Mammary epithelial cell (primary cell): ENCODE measurements at regions of chr14 and their contacts with region 1.

Region 1: GRCh38 chr14:104768437-104769323 is 15.7 kb downstream of the SIVA1 start:
- DNase-seq: peak; percentile 67
- H3K4me3 ChIP-seq: no peak overlapping the region
- H3K27ac ChIP-seq: no peak overlapping the region
- H3K4me1 ChIP-seq: peaks cover 4% of the 10 kb centered on the region
- H3K27me3 ChIP-seq: no peaks in the 10 kb centered on the region
- CTCF ChIP-seq: peak; percentile 77 to 88

Region 2: GRCh38 chr14:104370256-104370870 is 398.3 kb before region 1 on chr14:
- CTCF ChIA-PET with region 1: no interaction called
- dilution Hi-C with region 1: no loop called
- in situ Hi-C with region 1: no loop called
- intact Hi-C with region 1: no loop called
- DNase-seq: no peak
- H3K4me3 ChIP-seq: no peak overlapping the region
- H3K27ac ChIP-seq: no peak overlapping the region
- H3K4me1 ChIP-seq: no peaks in the 10 kb centered on the region
- H3K27me3 ChIP-seq: no peaks in the 10 kb centered on the region
- CTCF ChIP-seq: no peak

Region 3: DNA sequence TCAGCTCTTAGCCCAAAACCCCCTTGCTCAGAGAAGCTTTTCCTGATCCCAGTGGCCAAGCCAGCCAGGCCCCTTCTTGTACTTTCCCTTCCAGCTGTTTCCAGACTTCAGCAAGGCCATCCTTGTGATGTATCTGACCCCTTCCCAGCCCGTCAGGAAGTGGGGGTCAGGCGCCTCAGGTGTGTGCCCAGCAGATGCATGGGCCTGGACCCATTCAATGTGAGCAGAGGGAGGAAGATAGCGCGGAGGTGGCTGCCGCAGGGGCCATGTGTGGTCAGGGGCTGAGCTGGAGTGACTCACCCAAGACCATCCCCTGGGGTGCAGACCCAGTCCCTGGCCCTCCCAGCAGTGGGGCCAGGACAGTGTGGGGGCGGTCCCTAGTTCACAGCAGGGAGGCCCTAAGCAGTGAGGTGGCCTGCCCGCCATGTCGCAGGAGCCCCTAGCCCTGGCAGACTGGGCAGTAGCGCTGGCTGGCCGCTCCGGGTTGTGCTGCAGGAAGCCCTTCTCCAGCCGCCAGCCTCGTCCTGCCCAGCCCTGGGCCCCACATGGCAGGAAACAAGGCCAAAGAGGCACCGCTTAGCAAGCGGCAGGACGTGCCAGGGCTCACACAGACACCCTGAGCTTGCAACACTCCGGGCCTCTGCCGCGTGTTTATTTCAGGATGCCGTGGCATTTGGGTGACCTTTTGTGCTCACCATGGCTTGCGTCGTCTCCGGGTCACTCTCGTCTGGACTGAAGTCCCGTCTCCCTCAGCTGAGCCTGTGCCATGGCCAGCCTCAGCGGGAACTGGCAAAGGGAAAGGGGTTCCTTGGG is 32.6 kb before region 1 on chr14:
- CTCF ChIA-PET with region 1: no interaction called
- dilution Hi-C with region 1: loop called (anchors 5 kb)
- in situ Hi-C with region 1: no loop called
- intact Hi-C with region 1: no loop called
- DNase-seq: peak; percentile 30
- H3K4me3 ChIP-seq: no peak overlapping the region
- H3K27ac ChIP-seq: no peak overlapping the region
- H3K4me1 ChIP-seq: peaks cover 22% of the 10 kb centered on the region
- H3K27me3 ChIP-seq: no peaks in the 10 kb centered on the region
- CTCF ChIP-seq: no peak

Region 4: GRCh38 chr14:104826189-104826860 is 57.6 kb after region 1 on chr14:
- CTCF ChIA-PET with region 1: no interaction called
- dilution Hi-C with region 1: no loop called
- in situ Hi-C with region 1: loop called in 1 of 2 experiments (anchors 5 kb)
- intact Hi-C with region 1: loop called (anchors 1 kb)
- DNase-seq: peak; percentile 81
- H3K4me3 ChIP-seq: peak overlapping the region; percentile 56 to 74 (median 58)
- H3K27ac ChIP-seq: no peak overlapping the region
- H3K4me1 ChIP-seq: peaks cover 17% of the 10 kb centered on the region
- H3K27me3 ChIP-seq: no peaks in the 10 kb centered on the region
- CTCF ChIP-seq: peak; percentile 27 to 70

Region 5: GRCh38 chr14:104895786-104896661 is 127.3 kb after region 1 on chr14:
- CTCF ChIA-PET with region 1: no interaction called
- dilution Hi-C with region 1: loop called (anchors 5 kb)
- in situ Hi-C with region 1: no loop called
- intact Hi-C with region 1: no loop called
- DNase-seq: no peak
- H3K4me3 ChIP-seq: no peak overlapping the region
- H3K27ac ChIP-seq: no peak overlapping the region
- H3K4me1 ChIP-seq: peaks cover 11% of the 10 kb centered on the region
- H3K27me3 ChIP-seq: no peaks in the 10 kb centered on the region
- CTCF ChIP-seq: no peak

Region 6: DNA sequence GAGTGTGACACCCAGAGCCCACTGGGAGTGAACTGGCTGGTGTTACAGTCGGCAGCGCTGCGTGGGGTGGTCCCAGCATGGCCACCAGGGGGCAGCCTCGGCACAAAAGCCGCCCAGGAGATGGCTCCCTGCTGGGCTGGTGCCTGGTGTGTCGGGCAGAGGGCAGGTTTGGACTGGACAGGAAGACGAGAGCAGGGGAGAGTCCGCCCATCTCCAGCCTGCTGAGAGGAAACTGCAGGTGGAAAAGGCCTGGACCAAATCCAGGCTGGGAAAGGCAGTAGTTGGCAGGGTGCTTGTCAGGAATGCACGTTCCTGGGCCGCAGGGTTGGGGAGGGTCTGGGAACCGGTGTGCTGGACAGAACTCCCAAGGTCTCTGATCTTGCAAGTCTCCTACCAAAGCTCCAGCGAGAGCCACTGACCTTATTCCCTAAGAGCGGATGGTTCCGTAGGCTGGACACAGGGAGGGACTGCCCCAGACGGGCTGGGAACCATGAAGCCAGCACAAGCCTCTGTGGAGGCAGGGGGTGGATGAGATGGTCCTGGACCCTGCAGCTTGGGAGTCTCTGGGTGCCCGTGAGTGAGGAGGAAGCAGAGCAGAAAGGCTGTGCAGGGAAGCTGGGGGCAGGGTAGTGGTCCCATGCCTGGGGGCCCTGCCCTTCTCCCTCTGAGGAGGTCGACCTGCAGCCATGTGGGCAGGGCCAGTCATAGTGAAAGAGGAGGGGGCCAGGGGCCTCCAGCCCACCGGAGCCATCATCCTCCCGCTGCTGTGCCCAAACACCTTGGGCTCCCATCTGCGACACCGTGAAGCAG is 207.7 kb after region 1 on chr14:
- CTCF ChIA-PET with region 1: no interaction called
- dilution Hi-C with region 1: no loop called
- in situ Hi-C with region 1: no loop called
- intact Hi-C with region 1: loop called (anchors 5 kb)
- DNase-seq: peak; percentile 86
- H3K4me3 ChIP-seq: peak overlapping the region; percentile 75 to 82 (median 79)
- H3K27ac ChIP-seq: no peak overlapping the region
- H3K4me1 ChIP-seq: peaks cover 78% of the 10 kb centered on the region
- H3K27me3 ChIP-seq: no peaks in the 10 kb centered on the region
- CTCF ChIP-seq: peak; percentile 81 to 97

Region 7: DNA sequence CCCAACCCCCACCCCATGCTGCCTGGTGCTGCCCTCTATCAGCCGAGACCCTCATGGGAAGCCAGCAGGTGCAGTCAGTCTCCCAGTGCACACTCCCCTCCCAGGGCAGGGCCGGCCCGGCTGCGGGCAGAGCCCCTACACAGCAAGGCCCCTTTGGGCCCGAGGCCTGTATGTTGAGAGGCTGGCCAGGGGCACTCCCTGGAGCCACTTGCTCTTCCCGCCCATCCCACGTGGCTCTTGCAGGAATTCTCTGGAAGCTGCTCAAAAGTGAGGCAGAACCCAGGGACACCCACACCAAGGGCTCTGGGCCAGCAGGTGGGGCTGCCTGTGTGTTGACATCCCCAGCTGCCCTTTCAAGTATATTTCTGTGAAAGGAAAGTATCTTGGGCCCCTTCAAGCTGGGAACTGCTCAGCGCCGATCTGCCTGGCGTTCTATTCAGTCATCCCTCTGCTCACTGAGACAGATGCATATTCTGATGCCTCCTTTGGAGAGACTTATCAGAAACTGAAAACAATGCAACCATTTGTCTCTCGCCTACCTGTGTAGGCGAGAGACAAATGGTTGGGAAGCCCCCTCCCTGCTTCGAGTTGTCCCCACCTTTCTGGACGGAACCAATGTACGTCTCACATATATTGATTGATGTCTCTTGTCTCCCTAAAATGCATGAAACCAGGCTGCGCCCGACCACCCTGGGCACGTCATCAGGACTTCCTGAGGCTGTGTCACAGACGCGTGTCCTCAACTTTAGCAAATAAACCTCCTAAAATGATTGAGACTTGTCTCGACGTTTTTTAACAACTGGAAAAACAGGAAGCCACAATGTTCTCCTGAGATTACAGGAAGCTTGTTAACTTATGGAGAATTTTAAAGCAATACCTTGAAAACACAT is 290.6 kb after region 1 on chr14:
- CTCF ChIA-PET with region 1: no interaction called
- dilution Hi-C with region 1: loop called (anchors 5 kb)
- in situ Hi-C with region 1: no loop called
- intact Hi-C with region 1: no loop called
- DNase-seq: no peak
- H3K4me3 ChIP-seq: no peak overlapping the region
- H3K27ac ChIP-seq: no peak overlapping the region
- H3K4me1 ChIP-seq: no peaks in the 10 kb centered on the region
- H3K27me3 ChIP-seq: peaks cover 2% of the 10 kb centered on the region
- CTCF ChIP-seq: no peak